Psoas muscle (tissue), 8 donors: ENCODE measurements at regions of chr14 and their contacts with region 1.

Region 1: GRCh38 chr14:35341446-35342159 is 49.4 kb downstream of the PSMA6 start:
- DNase-seq: peak; percentile 95 to 97
- ATAC-seq: peak; percentile 86 to 91 (median 89)
- H3K4me3 ChIP-seq: peak overlapping the region; percentile 60
- H3K27ac ChIP-seq: peak overlapping the region; percentile 93
- H3K4me1 ChIP-seq: peaks cover 36% of the 10 kb centered on the region
- H3K27me3 ChIP-seq: no peaks in the 10 kb centered on the region
- CTCF ChIP-seq: no peak

Region 2: GRCh38 chr14:35301735-35302528 is 39.7 kb before region 1 on chr14:
- intact Hi-C with region 1: loop called (anchors 5 kb)
- DNase-seq: no peak
- ATAC-seq: peak in 3 of 4 donors; percentile 26 to 67 (median 38)
- H3K4me3 ChIP-seq: no peak overlapping the region
- H3K27ac ChIP-seq: peak overlapping the region; percentile 71
- H3K4me1 ChIP-seq: peaks cover 27% of the 10 kb centered on the region
- H3K27me3 ChIP-seq: no peaks in the 10 kb centered on the region
- CTCF ChIP-seq: no peak

Region 3: DNA sequence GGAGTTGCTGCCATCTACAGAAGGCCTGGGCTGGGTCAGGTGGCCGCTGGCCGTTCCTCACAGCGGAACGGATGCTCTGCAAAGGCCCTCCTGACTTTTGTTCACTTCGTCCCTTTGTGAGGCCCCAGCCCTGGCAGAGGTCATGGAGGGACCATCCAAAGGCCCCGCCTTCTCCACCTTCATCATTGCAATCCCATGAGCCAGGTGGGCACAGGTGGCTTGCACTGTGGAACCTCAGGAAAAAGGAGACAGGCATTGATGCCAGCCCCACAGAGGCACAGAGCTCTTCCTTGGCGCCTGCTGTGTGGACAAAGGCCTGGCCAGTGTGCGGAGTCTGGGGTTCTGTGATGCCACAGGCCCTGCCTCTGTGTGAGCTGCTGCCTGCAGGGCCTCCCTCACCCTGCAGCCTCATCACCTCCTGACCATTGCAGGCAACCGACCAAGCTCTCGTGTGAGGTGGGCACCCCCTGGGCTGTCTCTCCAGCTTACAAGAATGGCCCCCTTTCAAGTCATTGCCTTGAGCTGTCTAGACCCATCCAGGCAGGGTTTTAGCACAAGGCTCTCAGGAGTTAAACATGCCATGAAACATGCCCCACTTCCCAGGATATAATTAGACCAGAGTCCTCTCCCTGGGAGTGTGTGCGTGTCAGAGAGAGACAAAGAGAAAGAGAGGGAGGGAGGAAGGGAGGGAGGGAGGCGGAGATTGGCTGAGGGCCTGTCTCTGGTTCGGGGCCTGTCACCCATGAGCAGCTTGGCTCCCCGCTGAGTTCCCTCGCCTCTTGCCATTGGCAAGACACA is 43.6 kb after region 1 on chr14:
- intact Hi-C with region 1: loop called (anchors 2 to 5 kb)
- DNase-seq: peak; percentile 85 to 96
- ATAC-seq: peak; percentile 85 to 89 (median 88)
- H3K4me3 ChIP-seq: peak overlapping the region; percentile 47
- H3K27ac ChIP-seq: peak overlapping the region; percentile 98
- H3K4me1 ChIP-seq: peaks cover 37% of the 10 kb centered on the region
- H3K27me3 ChIP-seq: no peaks in the 10 kb centered on the region
- CTCF ChIP-seq: no peak

Region 4: GRCh38 chr14:35404449-35405303 is 63.1 kb after region 1 on chr14 and contains the start of gene NFKBIA:
- intact Hi-C with region 1: loop called (anchors 1 kb)
- DNase-seq: peak; percentile 92 to 97
- ATAC-seq: peak; percentile 61 to 76 (median 62)
- H3K4me3 ChIP-seq: peak within 1 kb of the TSS; percentile 98
- H3K27ac ChIP-seq: peak within 1 kb of the TSS; percentile 100
- H3K4me1 ChIP-seq: peaks cover 36% of the 10 kb centered on the region
- H3K27me3 ChIP-seq: no peaks in the 10 kb centered on the region
- CTCF ChIP-seq: peak; percentile 26
- total RNA-seq, gene NFKBIA: 48.7 to 144 (median 96.4) TPM

Region 5: DNA sequence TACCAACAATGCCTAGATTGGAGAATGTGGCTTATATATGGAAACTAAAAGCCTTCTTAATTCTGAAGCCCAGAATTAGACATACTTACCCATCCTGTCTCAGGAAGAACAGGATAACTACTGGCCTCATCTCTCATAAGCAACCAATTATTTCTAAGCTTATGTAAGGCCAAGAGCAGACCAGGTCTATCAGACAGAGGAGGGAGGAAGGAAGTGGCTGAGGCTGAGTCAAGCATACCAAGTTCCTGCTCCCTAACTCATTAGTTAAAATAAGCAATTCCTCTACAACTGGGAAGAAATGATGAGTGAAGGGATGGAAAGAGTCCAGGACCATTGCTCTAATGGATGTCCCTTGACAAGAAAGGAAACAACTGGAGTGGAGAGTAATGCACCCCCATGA is 165.3 kb after region 1 on chr14:
- intact Hi-C with region 1: no loop called
- DNase-seq: no peak
- ATAC-seq: no peak
- H3K4me3 ChIP-seq: no peak overlapping the region
- H3K27ac ChIP-seq: no peak overlapping the region
- H3K4me1 ChIP-seq: no peaks in the 10 kb centered on the region
- H3K27me3 ChIP-seq: no peaks in the 10 kb centered on the region
- CTCF ChIP-seq: no peak